Activated naive CD4-positive, alpha-beta T cell treated with anti-CD3 and anti-CD28 coated beads, Interleukin-2, amount 10 ng/mL, durations not matched to agents 7 days and 5 days (primary cell): ENCODE measurements at regions of chr19 and their contacts with region 1.

Region 1: DNA sequence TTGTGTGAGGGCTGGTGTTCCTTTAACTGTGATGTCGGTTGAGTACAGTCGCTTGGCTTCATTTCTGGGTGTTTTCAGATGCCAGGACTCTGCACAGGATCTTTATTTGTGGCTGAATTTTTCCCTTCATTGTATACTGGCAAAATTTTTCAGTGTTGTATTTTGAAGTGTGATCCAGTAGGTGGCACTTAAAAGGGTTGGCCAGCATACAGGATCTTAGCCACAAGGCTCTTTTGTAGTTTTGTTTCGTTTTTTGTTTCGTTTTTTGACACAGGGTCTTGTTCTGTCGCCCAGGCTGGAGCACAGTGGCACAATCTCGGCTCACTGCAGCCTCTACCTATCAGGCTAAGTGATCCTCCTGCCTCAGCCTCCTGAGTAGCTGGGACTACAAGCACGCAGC is 8.7 kb downstream of the FCAR start:
- DNase-seq: peak; percentile 34
- H3K4me3 Mint-ChIP-seq: peak overlapping the region; percentile 39
- H3K27ac Mint-ChIP-seq: peak overlapping the region; percentile 84
- H3K4me1 Mint-ChIP-seq: peaks cover 14% of the 10 kb centered on the region
- H3K27me3 Mint-ChIP-seq: peaks cover 28% of the 10 kb centered on the region

Region 2: GRCh38 chr19:54921082-54921481 is 38.3 kb after region 1 on chr19:
- CTCF ChIA-PET with region 1: interaction called, 10 read pairs
- DNase-seq: no peak
- H3K4me3 Mint-ChIP-seq: no peak overlapping the region
- H3K27ac Mint-ChIP-seq: no peak overlapping the region
- H3K4me1 Mint-ChIP-seq: peaks cover 8% of the 10 kb centered on the region
- H3K27me3 Mint-ChIP-seq: peaks cover 24% of the 10 kb centered on the region

Region 3: GRCh38 chr19:55068950-55069855 is 186.4 kb after region 1 on chr19:
- CTCF ChIA-PET with region 1: no interaction called
- DNase-seq: no peak
- H3K4me3 Mint-ChIP-seq: peak overlapping the region; percentile 2
- H3K27ac Mint-ChIP-seq: no peak overlapping the region
- H3K4me1 Mint-ChIP-seq: peaks cover 18% of the 10 kb centered on the region
- H3K27me3 Mint-ChIP-seq: peaks cover 88% of the 10 kb centered on the region

Region 4: GRCh38 chr19:55132453-55133129 is 249.8 kb after region 1 on chr19:
- CTCF ChIA-PET with region 1: interaction called, 20 read pairs
- DNase-seq: peak; percentile 45
- H3K4me3 Mint-ChIP-seq: no peak overlapping the region
- H3K27ac Mint-ChIP-seq: no peak overlapping the region
- H3K4me1 Mint-ChIP-seq: peaks cover 2% of the 10 kb centered on the region
- H3K27me3 Mint-ChIP-seq: peaks cover 76% of the 10 kb centered on the region

Region 5: GRCh38 chr19:55160128-55160985 is 277.6 kb after region 1 on chr19:
- CTCF ChIA-PET with region 1: interaction called, 14 read pairs
- DNase-seq: peak; percentile 92
- H3K4me3 Mint-ChIP-seq: no peak overlapping the region
- H3K27ac Mint-ChIP-seq: no peak overlapping the region
- H3K4me1 Mint-ChIP-seq: peaks cover 9% of the 10 kb centered on the region
- H3K27me3 Mint-ChIP-seq: peaks cover 89% of the 10 kb centered on the region